Lower leg skin (tissue), 4 donors: ENCODE measurements at regions of chr7 and their contacts with region 1.

Region 1: GRCh38 chr7:49228426-49229098 is 304.2 kb downstream of the CDC14C start:
- DNase-seq: no peak
- H3K4me3 ChIP-seq: no peak overlapping the region
- CTCF ChIP-seq: no peak
- POLR2A ChIP-seq: no peak

Region 2: DNA sequence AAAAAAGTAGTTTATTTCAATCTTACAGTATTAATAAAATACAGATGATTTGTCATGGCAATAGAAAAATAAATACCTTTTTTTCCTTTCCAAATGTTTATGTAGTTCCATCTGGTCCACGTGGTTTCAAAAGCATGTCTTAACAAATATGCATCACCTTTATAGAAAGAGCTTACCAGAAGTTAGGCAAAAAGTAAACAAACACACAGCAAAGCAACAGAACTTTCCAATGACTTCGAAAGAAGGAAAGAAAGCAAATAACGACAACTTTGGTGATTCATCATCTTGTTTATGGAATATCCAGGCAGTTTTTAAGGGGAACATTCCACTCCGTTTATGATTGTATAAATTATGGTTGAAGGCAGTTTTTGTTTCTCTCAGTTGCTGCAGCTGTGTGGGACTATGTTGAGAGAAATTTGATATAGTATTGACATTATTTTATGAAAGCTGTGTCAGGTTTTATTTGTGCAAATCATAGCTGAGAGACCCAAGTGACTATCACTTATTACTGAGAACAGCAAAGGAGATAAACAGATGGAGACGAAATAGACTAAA is 101.1 kb before region 1 on chr7:
- intact Hi-C with region 1: no loop called
- DNase-seq: no peak
- H3K4me3 ChIP-seq: no peak overlapping the region
- CTCF ChIP-seq: no peak
- POLR2A ChIP-seq: no peak

Region 3: DNA sequence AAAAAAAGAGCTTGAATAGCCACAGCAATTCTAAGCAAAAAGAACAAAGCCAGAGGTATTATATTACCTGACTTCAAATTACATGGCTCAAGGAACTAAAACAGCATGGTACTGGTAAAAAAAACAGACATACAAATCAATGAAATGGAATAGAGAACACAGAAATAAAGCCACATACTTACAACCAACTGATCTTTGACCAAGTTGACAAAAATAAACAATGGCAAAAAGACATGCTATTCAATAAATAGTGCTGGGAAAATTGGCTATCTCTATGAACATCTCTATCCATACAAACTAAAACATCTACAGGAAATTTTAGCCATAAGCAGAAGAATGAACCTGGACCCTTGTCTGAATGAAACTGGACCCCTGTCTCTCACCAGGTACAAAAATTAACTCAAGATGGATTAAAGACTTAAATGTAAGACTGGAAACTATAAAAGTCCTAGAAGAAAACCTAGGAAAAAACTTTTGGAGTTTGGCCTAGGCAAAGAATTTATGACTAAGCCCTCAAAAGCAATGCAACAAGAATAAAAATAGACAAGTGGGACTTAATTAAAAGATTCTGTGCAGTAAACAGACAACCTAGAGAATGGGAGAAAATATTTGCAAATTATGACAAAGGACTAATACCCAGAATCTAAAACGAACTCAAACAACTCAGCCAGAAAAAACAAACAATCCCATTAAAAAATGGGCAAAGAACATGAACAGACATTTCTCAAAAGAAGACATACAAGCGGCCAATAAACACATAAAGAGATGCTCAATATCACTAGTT is 1409.4 kb after region 1 on chr7:
- intact Hi-C with region 1: loop called (anchors 5 kb)
- DNase-seq: no peak
- H3K4me3 ChIP-seq: no peak overlapping the region
- CTCF ChIP-seq: no peak
- POLR2A ChIP-seq: no peak